Caco-2 (cell line): ENCODE measurements at regions of chr5 and their contacts with region 1.

Region 1: GRCh38 chr5:138610918-138611677 is 35.9 kb upstream of the HSPA9 start:
- DNase-seq: no peak
- H3K4me3 ChIP-seq: no peak overlapping the region
- H3K4me3 Mint-ChIP-seq: no peak overlapping the region
- H3K27ac Mint-ChIP-seq: no peak overlapping the region
- H3K4me1 ChIP-seq: peaks cover 10% of the 10 kb centered on the region; the same call in 1 of the 2 replicates
- H3K4me1 Mint-ChIP-seq: no peaks in the 10 kb centered on the region
- H3K27me3 ChIP-seq: no peaks in the 10 kb centered on the region
- H3K27me3 Mint-ChIP-seq: no peaks in the 10 kb centered on the region
- CTCF ChIP-seq: no peak

Region 2: GRCh38 chr5:138482638-138483037 is 128.5 kb before region 1 on chr5:
- CTCF ChIA-PET with region 1: no interaction called
- POLR2A ChIA-PET with region 1: interaction called, 11 read pairs
- intact Hi-C with region 1: no loop called
- DNase-seq: no peak
- H3K4me3 ChIP-seq: no peak overlapping the region
- H3K4me3 Mint-ChIP-seq: no peak overlapping the region
- H3K27ac Mint-ChIP-seq: no peak overlapping the region
- H3K4me1 ChIP-seq: no peaks in the 10 kb centered on the region
- H3K4me1 Mint-ChIP-seq: peaks cover 7% of the 10 kb centered on the region
- H3K27me3 ChIP-seq: no peaks in the 10 kb centered on the region
- H3K27me3 Mint-ChIP-seq: no peaks in the 10 kb centered on the region
- CTCF ChIP-seq: no peak

Region 3: DNA sequence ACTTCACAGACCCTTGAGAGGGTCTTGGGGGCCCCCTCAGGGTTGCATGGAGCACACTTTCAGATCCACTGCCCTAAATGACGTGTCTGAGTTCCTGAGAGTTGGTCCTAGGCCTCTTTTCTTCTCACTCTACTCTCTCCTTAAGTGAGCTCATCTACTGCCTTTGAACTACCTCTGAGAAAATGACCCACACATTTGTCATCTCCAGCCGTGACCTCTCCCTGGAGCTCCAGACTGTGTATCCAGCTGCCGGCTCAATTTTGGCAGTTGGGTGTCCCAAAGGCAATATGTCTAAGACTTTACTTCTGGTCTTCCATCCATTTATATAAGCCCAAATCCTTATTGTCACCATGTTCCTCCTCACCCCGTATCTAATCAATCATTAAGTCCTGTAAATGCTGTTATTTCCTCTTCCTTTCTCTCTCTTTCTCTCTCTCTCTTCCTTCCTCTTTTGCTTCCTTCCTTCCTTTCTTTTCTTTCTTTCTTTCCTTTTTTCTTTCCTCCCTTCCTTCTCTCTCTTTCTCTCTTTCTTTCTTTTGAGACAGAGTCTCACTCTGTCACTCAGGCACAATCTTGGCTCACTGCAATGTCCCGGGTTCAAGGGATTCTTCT is 15.3 kb after region 1 on chr5:
- CTCF ChIA-PET with region 1: no interaction called
- POLR2A ChIA-PET with region 1: no interaction called
- intact Hi-C with region 1: loop called (anchors 2 kb)
- DNase-seq: no peak
- H3K4me3 ChIP-seq: no peak overlapping the region
- H3K4me3 Mint-ChIP-seq: no peak overlapping the region
- H3K27ac Mint-ChIP-seq: no peak overlapping the region
- H3K4me1 ChIP-seq: peaks cover 3% of the 10 kb centered on the region; the same call in 1 of the 2 replicates
- H3K4me1 Mint-ChIP-seq: no peaks in the 10 kb centered on the region
- H3K27me3 ChIP-seq: no peaks in the 10 kb centered on the region
- H3K27me3 Mint-ChIP-seq: no peaks in the 10 kb centered on the region
- CTCF ChIP-seq: no peak